K562 (cell line): ENCODE measurements at regions of chr5 and their contacts with region 1.

Region 1: DNA sequence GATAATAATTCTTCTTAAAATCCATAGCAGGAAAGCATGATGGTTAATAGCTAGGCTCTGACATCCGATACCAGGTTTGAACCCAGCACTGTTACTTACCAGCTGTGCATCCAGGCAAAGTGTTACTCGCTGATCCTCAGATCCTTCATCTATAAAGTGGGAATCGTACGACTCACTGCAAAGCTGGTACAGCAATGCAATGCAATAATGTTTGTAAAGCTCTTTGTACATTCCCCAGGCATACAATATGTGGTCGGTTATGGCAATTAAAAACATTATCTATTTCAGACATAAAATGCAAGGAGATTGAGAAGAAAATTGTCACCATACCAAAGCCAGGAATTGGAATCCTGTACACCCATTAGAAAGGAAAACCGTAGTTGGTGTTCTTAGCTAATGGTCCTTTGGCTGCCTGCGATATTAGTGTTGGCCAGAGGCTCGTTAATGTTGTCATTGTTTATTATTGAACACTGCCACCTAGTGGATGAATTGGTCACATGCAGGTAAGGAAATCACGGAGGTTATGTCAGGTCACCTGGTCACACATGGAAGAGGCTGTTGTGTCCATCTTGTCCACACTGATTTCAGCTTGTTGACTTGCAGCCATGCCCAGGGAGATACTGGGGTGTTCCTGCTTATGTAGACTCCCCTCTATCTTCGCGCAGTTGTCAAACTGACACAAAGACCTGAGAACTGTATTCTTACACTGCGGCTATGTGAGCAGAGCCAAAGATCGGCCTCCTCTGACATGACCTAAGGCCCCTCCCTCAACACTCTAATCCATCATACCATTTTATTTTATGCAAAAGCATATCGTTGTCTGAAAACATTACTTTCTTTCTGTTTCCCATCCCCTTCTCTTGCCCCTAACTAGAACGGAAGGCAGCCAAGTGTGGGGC is 87.5 kb upstream of the PPP2R2B start:
- DNase-seq: peak; percentile 43 to 75 (median 66)
- ATAC-seq: peak; percentile 96
- H3K4me3 ChIP-seq: no peak overlapping the region
- H3K27ac ChIP-seq: no peak overlapping the region
- H3K4me1 ChIP-seq: no peaks in the 10 kb centered on the region
- H3K27me3 ChIP-seq: no peaks in the 10 kb centered on the region
- CTCF ChIP-seq: peak; percentile 73 to 92 (median 74)
- EP300 ChIP-seq: no peak
- POLR2A ChIP-seq: no peak
- RAD21 ChIP-seq: peak; percentile 80 to 84

Region 2: GRCh38 chr5:146313027-146313426 is 653.0 kb before region 1 on chr5:
- CTCF ChIA-PET with region 1: no interaction called
- POLR2A ChIA-PET with region 1: no interaction called
- in situ Hi-C with region 1: loop called (anchors 25 kb)
- intact Hi-C with region 1: no loop called
- DNase-seq: no peak
- ATAC-seq: peak; percentile 52; the same call in 2 of the 3 replicates
- H3K4me3 ChIP-seq: no peak overlapping the region
- H3K27ac ChIP-seq: no peak overlapping the region
- H3K4me1 ChIP-seq: no peaks in the 10 kb centered on the region
- H3K27me3 ChIP-seq: peaks cover 35 to 60% of the 10 kb centered on the region in 2 experiments
- CTCF ChIP-seq: no peak
- EP300 ChIP-seq: no peak
- POLR2A ChIP-seq: no peak
- RAD21 ChIP-seq: no peak

Region 3: DNA sequence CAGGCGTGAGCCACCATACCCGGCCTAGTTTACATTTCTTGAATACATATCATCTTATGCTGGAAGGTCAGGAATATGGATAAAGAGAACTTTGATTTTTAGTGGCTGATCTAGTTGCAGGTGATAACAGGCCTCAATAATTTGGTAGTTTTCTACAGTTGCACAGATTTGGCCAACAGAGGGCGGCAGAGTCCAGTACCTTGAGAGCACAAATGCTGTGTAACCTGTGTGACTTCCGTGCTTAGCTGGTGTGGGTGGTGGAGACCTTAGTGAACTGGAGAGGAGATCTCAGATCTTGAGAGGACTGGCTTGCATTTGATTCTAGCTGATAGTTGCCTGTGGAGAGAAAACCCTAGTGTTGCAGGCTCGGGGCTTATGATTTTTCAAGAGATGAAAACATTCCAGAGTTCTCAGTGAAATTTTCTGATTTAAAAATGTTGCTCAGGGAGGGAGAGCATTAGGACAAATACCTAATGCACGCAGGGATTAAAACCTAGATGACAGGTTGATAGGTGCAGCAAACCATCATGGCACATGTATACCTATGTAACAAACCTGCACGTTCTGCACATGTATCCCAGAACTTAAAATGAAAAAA is 432.7 kb before region 1 on chr5:
- CTCF ChIA-PET with region 1: interaction called, 7 read pairs
- POLR2A ChIA-PET with region 1: no interaction called
- in situ Hi-C with region 1: no loop called
- intact Hi-C with region 1: loop called (anchors 1 kb)
- DNase-seq: peak; percentile 55 to 81 (median 58)
- ATAC-seq: peak; percentile 98
- H3K4me3 ChIP-seq: no peak overlapping the region
- H3K27ac ChIP-seq: no peak overlapping the region
- H3K4me1 ChIP-seq: no peaks in the 10 kb centered on the region
- H3K27me3 ChIP-seq: peaks cover 0 to 11% of the 10 kb centered on the region in 2 experiments; a peak in 1 of 5 replicates
- CTCF ChIP-seq: peak; percentile 77 to 86 (median 81)
- EP300 ChIP-seq: no peak
- POLR2A ChIP-seq: no peak
- RAD21 ChIP-seq: peak; percentile 59 to 80

Region 4: GRCh38 chr5:146541958-146542849 is 423.8 kb before region 1 on chr5:
- CTCF ChIA-PET with region 1: interaction called, 3 read pairs
- POLR2A ChIA-PET with region 1: no interaction called
- in situ Hi-C with region 1: no loop called
- intact Hi-C with region 1: loop called (anchors 1 kb)
- DNase-seq: peak; percentile 70 to 75 (median 75)
- ATAC-seq: peak; percentile 99
- H3K4me3 ChIP-seq: no peak overlapping the region
- H3K27ac ChIP-seq: no peak overlapping the region
- H3K4me1 ChIP-seq: no peaks in the 10 kb centered on the region
- H3K27me3 ChIP-seq: peaks cover 0 to 13% of the 10 kb centered on the region in 2 experiments; a peak in 2 of 5 replicates
- CTCF ChIP-seq: peak; percentile 83 to 92 (median 85)
- EP300 ChIP-seq: no peak
- POLR2A ChIP-seq: no peak
- RAD21 ChIP-seq: peak; percentile 77 to 83

Region 5: GRCh38 chr5:146565764-146566367 is 400.1 kb before region 1 on chr5:
- CTCF ChIA-PET with region 1: interaction called, 3 read pairs
- POLR2A ChIA-PET with region 1: no interaction called
- in situ Hi-C with region 1: no loop called
- intact Hi-C with region 1: loop called (anchors 1 kb)
- DNase-seq: peak; percentile 67 to 80 (median 74)
- ATAC-seq: peak; percentile 100
- H3K4me3 ChIP-seq: no peak overlapping the region
- H3K27ac ChIP-seq: no peak overlapping the region
- H3K4me1 ChIP-seq: no peaks in the 10 kb centered on the region
- H3K27me3 ChIP-seq: no peaks in the 10 kb centered on the region
- CTCF ChIP-seq: peak; percentile 78 to 80 (median 79)
- EP300 ChIP-seq: no peak
- POLR2A ChIP-seq: no peak
- RAD21 ChIP-seq: peak; percentile 58 to 73

Region 6: GRCh38 chr5:146662229-146662628 is 303.8 kb before region 1 on chr5:
- CTCF ChIA-PET with region 1: no interaction called
- POLR2A ChIA-PET with region 1: no interaction called
- in situ Hi-C with region 1: no loop called
- intact Hi-C with region 1: loop called (anchors 10 kb)
- DNase-seq: peak in 3 of 4 experiments; percentile 9 to 22 (median 15)
- ATAC-seq: no peak
- H3K4me3 ChIP-seq: no peak overlapping the region
- H3K27ac ChIP-seq: no peak overlapping the region
- H3K4me1 ChIP-seq: no peaks in the 10 kb centered on the region
- H3K27me3 ChIP-seq: no peaks in the 10 kb centered on the region
- CTCF ChIP-seq: peak; percentile 16 to 47 (median 39); a peak in 3 of 6 replicates
- EP300 ChIP-seq: no peak
- POLR2A ChIP-seq: no peak
- RAD21 ChIP-seq: peak in 1 of 2 experiments; percentile 29; a peak in 1 of 4 replicates

Region 7: DNA sequence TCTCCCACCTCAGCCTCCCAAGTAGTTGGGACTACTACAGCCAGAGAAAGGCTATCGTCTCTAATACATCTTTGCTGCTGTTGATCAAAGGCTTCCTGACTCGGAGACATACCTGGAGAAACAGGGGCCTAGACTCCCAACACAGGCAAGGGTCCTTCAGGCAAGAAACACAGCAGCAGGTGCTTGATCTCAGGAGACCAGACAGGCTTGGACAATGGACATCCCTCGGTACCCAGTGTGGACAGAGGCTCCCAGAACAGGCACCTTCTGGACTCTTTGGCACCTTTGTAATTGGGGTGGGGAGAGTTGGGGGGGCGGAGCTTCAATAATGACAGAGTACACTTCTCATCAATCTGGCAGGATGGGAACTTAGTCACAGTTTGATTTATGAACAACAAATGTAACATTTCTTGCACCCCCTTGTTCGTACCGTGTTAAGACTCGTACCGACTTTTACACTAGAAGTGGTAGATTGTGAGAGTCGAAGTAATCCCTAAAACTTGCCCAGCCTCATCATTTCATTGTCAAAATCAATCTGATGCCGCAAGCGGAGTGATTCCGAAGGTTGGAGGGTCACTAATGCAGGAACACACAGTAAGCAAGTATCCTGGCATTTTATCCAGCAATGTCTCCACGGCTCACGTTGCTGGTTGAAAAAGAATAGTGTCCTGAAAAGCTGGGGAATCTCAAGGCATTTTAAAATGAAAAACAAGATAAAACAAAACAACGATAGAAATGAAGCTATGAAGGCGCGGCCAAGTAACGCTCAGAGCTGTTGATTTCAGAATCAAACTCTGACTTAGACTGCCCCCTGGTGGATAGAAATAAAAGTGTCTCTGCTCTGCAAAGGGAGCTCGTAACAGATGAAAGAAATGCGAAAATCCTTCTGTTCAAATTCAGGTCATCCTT is 222.4 kb after region 1 on chr5:
- CTCF ChIA-PET with region 1: interaction called, 3 read pairs
- POLR2A ChIA-PET with region 1: no interaction called
- in situ Hi-C with region 1: no loop called
- intact Hi-C with region 1: loop called (anchors 5 kb)
- DNase-seq: peak; percentile 53 to 75 (median 63)
- ATAC-seq: peak; percentile 86
- H3K4me3 ChIP-seq: no peak overlapping the region
- H3K27ac ChIP-seq: no peak overlapping the region
- H3K4me1 ChIP-seq: no peaks in the 10 kb centered on the region
- H3K27me3 ChIP-seq: no peaks in the 10 kb centered on the region
- CTCF ChIP-seq: peak; percentile 47 to 70 (median 69)
- EP300 ChIP-seq: no peak
- POLR2A ChIP-seq: no peak
- RAD21 ChIP-seq: peak; percentile 55 to 76